ENCODE measurements at regions of chr12 and their contacts with region 1.

Region 1: DNA sequence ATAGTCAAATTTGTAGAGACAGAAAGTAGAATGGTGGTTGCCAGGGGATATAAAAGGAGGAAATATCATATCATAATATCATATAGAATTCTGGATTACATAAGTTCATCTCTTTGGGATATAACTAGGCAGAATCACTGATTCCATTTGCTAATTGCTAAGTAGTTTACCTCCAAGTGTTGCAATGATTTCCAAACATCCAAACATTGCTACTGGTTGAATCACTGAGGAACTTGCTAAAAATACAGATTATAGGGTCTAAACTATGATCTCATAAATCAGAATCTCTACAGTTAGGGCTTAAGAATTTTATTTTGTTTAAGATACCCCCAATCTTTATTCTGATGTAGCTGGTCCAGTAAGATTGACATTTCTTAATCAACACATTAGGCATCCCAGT is 16.1 kb upstream of the TAS2R42 start:
- DNase-seq: no peak
- CTCF ChIP-seq: no peak

Region 2: DNA sequence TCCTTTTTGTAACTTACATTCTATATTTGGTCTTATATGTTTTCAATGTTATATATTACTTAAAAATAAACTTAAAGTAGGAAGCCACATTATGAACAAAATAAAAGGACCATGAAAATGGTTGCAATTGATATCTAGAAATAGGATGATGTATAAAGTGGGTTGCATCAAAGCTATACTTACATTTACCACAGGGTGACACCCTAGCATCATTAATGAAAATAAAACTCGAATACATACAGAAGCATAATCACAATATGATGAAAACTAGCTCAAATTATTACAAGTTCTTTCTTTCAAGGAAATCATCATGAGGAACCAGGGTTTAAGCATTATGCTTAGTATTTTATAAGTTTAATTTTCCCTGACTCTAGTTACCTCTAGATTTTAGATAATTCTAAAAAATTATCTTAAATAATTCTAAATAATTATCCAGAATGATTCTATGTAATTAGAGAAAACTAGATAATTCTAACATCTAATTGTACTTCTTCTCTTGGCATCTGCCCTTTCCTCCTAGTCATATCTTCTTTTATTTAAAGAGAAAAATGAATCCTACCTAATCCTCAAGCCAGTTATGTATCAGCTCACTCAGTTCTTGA is 431.6 kb before region 1 on chr12:
- CTCF ChIA-PET with region 1: interaction called, 41 read pairs
- POLR2A ChIA-PET with region 1: no interaction called
- DNase-seq: no peak
- CTCF ChIP-seq: peak; percentile 57

Region 3: GRCh38 chr12:11186837-11187236 is 16.0 kb before region 1 on chr12 and contains the start of gene TAS2R42:
- CTCF ChIA-PET with region 1: no interaction called
- POLR2A ChIA-PET with region 1: no interaction called
- DNase-seq: no peak
- CTCF ChIP-seq: no peak

Region 4: GRCh38 chr12:11228296-11228879 is 25.6 kb after region 1 on chr12:
- CTCF ChIA-PET with region 1: interaction called, 13 read pairs
- POLR2A ChIA-PET with region 1: no interaction called
- DNase-seq: peak; percentile 24
- CTCF ChIP-seq: peak; percentile 72

Region 5: DNA sequence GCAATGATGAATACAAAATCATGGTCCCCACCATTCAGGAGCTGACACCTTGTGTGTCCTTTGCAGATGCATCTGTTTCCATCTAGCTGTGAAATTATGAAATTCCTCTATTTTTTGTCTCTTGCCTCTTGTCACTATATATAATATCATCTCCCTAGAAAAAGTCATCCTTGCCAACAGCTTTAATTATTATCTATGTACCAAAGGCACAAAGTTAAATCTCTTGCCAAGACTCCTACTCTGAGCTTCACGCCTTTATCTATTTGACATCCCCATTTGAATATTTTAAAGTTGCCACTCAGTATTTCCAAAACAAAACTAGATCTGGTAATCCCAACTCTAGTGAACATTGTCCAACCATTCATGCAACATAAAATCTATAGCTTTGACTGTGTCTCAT is 224.5 kb after region 1 on chr12:
- CTCF ChIA-PET with region 1: no interaction called
- POLR2A ChIA-PET with region 1: no interaction called
- DNase-seq: no peak
- CTCF ChIP-seq: no peak

Measured in GM10248 (cell line).